PC-3 (cell line): ENCODE measurements at regions of chr2 and their contacts with region 1.

Region 1: GRCh38 chr2:23760736-23761135 is 166.2 kb downstream of the ATAD2B start:
- DNase-seq: peak; percentile 56
- ATAC-seq: no peak
- H3K4me3 ChIP-seq: no peak overlapping the region
- H3K27ac ChIP-seq: no peak overlapping the region
- H3K4me1 ChIP-seq: peaks cover 14% of the 10 kb centered on the region
- H3K27me3 ChIP-seq: no peaks in the 10 kb centered on the region
- CTCF ChIP-seq: peak; percentile 62

Region 2: GRCh38 chr2:23360571-23361125 is 400.1 kb before region 1 on chr2:
- CTCF ChIA-PET with region 1: no interaction called
- POLR2A ChIA-PET with region 1: no interaction called
- intact Hi-C with region 1: loop called (anchors 10 kb)
- DNase-seq: no peak
- ATAC-seq: no peak
- H3K4me3 ChIP-seq: no peak overlapping the region
- H3K27ac ChIP-seq: no peak overlapping the region
- H3K4me1 ChIP-seq: no peaks in the 10 kb centered on the region
- H3K27me3 ChIP-seq: peaks cover 8% of the 10 kb centered on the region
- CTCF ChIP-seq: no peak

Region 3: DNA sequence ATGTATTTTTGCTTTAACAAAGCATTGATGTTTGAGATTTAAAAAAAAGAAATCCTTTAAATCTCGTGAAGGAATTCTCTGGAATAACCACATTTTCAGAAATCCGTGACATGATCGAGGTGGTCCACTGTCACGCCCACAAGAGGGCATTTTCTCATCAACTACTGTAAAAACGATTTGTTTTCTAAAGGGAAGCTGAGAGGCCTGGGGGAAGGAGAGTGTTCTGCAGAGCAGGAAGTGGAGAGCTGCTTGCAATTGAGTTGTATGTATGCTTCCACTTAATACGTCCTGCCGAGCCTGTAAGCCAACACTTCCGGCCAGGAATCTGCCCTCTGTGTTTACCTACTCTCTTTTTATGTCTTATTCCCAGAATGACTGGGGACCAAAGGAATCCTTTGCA is 356.3 kb before region 1 on chr2:
- CTCF ChIA-PET with region 1: no interaction called
- POLR2A ChIA-PET with region 1: no interaction called
- intact Hi-C with region 1: loop called (anchors 10 kb)
- DNase-seq: peak; percentile 78
- ATAC-seq: peak; percentile 96
- H3K4me3 ChIP-seq: peak overlapping the region; percentile 60
- H3K27ac ChIP-seq: peak overlapping the region; percentile 67
- H3K4me1 ChIP-seq: peaks cover 21% of the 10 kb centered on the region
- H3K27me3 ChIP-seq: no peaks in the 10 kb centered on the region
- CTCF ChIP-seq: peak; percentile 46

Region 4: DNA sequence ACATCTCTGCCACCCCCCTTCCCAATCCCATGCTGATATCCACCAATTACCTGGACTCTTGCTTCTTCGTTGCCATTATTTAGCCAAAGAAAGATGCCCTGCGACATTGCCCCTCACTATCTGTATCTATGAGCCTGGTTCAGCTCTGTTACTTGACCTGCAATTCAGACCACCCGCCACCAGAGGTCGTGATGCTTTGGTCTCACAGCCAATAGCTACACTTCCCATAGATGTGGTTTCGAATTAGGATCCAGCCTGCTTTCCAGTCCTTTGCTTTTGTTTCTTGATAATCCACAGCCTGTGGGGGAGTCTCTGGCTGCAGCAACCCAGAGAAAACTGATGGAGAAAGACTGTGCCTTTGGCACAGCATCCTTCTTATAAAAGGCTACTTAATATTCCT is 136.4 kb before region 1 on chr2:
- CTCF ChIA-PET with region 1: no interaction called
- POLR2A ChIA-PET with region 1: no interaction called
- intact Hi-C with region 1: loop called (anchors 5 kb)
- DNase-seq: peak; percentile 67
- ATAC-seq: peak; percentile 53; the same call in 1 of the 2 replicates
- H3K4me3 ChIP-seq: no peak overlapping the region
- H3K27ac ChIP-seq: no peak overlapping the region
- H3K4me1 ChIP-seq: no peaks in the 10 kb centered on the region
- H3K27me3 ChIP-seq: no peaks in the 10 kb centered on the region
- CTCF ChIP-seq: peak; percentile 87

Region 5: GRCh38 chr2:23636426-23636825 is 124.3 kb before region 1 on chr2:
- CTCF ChIA-PET with region 1: no interaction called
- POLR2A ChIA-PET with region 1: no interaction called
- intact Hi-C with region 1: loop called (anchors 5 kb)
- DNase-seq: peak; percentile 22
- ATAC-seq: peak; percentile 84
- H3K4me3 ChIP-seq: no peak overlapping the region
- H3K27ac ChIP-seq: no peak overlapping the region
- H3K4me1 ChIP-seq: no peaks in the 10 kb centered on the region
- H3K27me3 ChIP-seq: no peaks in the 10 kb centered on the region
- CTCF ChIP-seq: peak; percentile 47

Region 6: DNA sequence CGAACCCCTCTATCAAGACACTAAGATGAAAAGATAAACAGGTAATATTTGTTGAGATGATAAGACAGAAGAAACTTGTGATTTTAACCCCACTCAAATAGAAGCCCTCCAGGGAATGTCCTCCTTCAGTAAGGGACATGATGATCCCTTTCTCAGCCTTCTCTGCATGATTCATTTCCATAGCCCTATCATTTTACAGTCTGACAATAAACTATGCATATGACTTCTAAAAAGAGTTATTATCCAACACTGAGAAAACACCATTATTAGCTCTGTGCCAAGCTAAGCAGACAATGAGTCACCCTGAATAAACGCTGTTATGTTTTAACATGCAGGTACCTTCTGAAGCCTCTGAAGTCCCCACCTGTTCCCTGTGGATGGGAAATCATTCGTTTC is 1857.9 kb after region 1 on chr2:
- CTCF ChIA-PET with region 1: no interaction called
- POLR2A ChIA-PET with region 1: no interaction called
- intact Hi-C with region 1: no loop called
- DNase-seq: peak; percentile 96
- ATAC-seq: peak; percentile 94
- H3K4me3 ChIP-seq: peak overlapping the region; percentile 43
- H3K27ac ChIP-seq: peak overlapping the region; percentile 88
- H3K4me1 ChIP-seq: peaks cover 23% of the 10 kb centered on the region
- H3K27me3 ChIP-seq: no peaks in the 10 kb centered on the region
- CTCF ChIP-seq: no peak